ENCODE measurements at regions of chr2 and their contacts with region 1.

Region 1: GRCh38 chr2:134411828-134412638 is 158.2 kb downstream of the MGAT5 start:
- DNase-seq: no peak
- H3K4me3 ChIP-seq: no peak overlapping the region
- H3K27ac ChIP-seq: peak overlapping the region; percentile 4
- H3K27me3 ChIP-seq: no peaks in the 10 kb centered on the region
- CTCF ChIP-seq: peak; percentile 77

Region 2: DNA sequence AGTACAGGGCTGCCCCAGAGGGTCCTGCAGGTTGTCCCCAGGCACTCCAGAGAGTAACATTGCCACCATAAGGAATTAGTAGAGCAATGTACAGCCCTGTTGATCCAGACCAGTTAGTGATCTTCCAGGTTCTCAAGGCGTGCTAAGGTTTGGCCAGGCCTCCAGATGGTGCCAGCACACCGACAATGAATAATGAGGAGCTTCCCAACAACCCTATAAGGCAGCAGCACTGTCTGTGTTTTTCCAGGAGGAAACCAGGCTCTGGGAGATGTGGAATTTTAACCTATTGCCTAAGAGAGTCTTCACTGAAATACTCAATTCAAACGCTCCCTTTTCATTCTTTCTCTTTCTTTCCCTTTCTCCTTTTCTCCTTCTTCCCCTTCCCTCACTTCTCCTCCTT is 36.1 kb before region 1 on chr2:
- CTCF ChIA-PET with region 1: interaction called, 11 read pairs
- POLR2A ChIA-PET with region 1: no interaction called
- DNase-seq: no peak
- H3K4me3 ChIP-seq: no peak overlapping the region
- H3K27ac ChIP-seq: no peak overlapping the region
- H3K27me3 ChIP-seq: no peaks in the 10 kb centered on the region
- CTCF ChIP-seq: peak; percentile 23; the same call in 1 of the 2 replicates

Region 3: GRCh38 chr2:134647607-134648256 is 235.7 kb after region 1 on chr2:
- CTCF ChIA-PET with region 1: no interaction called
- POLR2A ChIA-PET with region 1: no interaction called
- DNase-seq: no peak
- H3K4me3 ChIP-seq: no peak overlapping the region
- H3K27ac ChIP-seq: no peak overlapping the region
- H3K27me3 ChIP-seq: no peaks in the 10 kb centered on the region
- CTCF ChIP-seq: no peak

Measured in AG04450 (cell line).